PC-9 (cell line): ENCODE measurements at regions of chr19 and their contacts with region 1.

Region 1: DNA sequence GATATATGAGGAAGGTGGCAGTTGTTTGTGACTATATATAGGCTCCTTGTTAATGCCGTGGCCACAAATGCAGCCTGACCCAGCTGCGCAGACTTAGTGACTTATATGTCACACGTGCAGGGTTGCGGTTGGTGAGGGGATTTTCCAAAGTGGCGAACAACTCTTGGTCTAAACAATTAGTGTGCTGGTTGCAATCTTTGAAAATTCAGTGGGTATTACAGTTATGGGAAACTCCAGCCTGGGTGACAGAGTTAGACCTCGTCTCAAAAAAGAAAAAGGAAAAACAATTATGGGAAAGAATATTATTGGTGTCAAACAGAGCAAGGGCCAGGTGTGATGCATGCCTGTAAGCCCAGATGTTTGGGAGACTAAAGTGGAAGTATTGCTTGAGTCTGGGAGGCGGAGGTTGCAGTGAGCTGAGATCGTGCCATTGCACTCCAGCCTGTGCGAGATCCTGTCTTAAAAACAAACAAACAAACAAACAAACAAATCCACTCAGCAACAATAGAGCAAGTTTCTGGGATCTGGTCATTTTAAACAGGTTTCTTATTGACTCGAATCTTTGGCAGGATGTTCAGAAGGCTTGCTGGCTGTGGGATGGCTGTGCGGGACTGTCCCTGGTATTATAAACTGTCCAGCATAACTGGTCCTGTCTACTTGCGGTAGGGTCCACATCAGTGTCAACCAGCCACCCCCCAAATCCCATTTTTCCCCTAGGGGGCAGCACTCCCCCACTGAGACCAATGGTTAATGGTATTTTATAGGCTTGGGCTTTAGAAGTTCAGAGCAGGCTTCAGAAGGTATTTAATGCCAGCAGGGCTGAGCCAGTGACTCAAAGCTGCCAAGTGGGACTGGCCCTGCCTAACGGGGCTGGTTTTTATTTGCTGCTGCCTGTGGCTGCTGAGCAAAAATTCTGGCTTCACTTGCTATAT is 15.4 kb downstream of the RELB start:
- DNase-seq: peak; percentile 67 to 75
- H3K4me3 ChIP-seq: no peak overlapping the region
- H3K27ac ChIP-seq: no peak overlapping the region
- H3K4me1 ChIP-seq: no peaks in the 10 kb centered on the region
- H3K27me3 ChIP-seq: no peaks in the 10 kb centered on the region
- CTCF ChIP-seq: peak; percentile 80

Region 2: GRCh38 chr19:44817725-44818465 is 198.8 kb before region 1 on chr19:
- CTCF ChIA-PET with region 1: interaction called, 12 read pairs
- POLR2A ChIA-PET with region 1: no interaction called
- intact Hi-C with region 1: no loop called
- DNase-seq: no peak
- H3K4me3 ChIP-seq: no peak overlapping the region
- H3K27ac ChIP-seq: no peak overlapping the region
- H3K4me1 ChIP-seq: no peaks in the 10 kb centered on the region
- H3K27me3 ChIP-seq: no peaks in the 10 kb centered on the region
- CTCF ChIP-seq: no peak

Region 3: DNA sequence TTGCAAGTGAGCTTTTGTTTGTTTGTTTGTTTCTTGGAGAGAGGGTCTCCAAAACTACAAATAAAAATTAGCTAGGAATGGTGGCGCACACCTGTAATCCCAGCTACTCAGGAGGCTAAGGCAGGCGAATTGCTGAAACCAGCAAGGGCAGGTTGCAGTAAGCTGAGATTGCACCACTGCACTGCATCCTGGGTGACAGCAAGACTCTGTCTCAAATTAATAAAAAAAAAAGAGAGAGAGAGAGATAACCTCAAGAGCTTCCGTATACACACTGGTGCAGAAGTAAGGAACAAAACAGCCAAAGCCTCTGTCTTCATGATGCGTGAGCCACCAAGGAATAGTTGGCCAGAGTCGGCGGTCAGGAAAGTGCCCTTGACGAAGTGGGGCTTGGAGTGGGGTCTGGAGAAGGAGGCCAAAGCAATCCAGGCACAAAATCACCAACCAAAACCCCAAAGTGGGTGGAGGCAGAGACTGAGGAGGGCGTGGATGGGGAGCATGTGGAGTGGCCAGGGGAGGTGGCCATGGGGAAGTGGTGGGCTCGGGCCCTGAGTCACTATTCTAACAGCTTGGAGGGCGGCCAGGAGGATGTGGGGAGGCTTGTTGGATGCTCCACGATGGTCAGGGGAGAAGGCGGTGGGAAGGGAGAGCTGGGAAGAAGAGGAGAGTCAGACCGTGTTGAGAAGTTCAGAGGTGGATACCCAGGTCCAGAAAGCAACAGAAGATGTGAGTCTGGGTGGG is 146.8 kb before region 1 on chr19:
- CTCF ChIA-PET with region 1: no interaction called
- POLR2A ChIA-PET with region 1: no interaction called
- intact Hi-C with region 1: no loop called
- DNase-seq: no peak
- H3K4me3 ChIP-seq: no peak overlapping the region
- H3K27ac ChIP-seq: no peak overlapping the region
- H3K4me1 ChIP-seq: peaks cover 8% of the 10 kb centered on the region
- H3K27me3 ChIP-seq: no peaks in the 10 kb centered on the region
- CTCF ChIP-seq: no peak

Region 4: GRCh38 chr19:45027371-45027770 is 10.7 kb after region 1 on chr19:
- CTCF ChIA-PET with region 1: no interaction called
- POLR2A ChIA-PET with region 1: no interaction called
- intact Hi-C with region 1: no loop called
- DNase-seq: no peak
- H3K4me3 ChIP-seq: no peak overlapping the region
- H3K27ac ChIP-seq: no peak overlapping the region
- H3K4me1 ChIP-seq: no peaks in the 10 kb centered on the region
- H3K27me3 ChIP-seq: no peaks in the 10 kb centered on the region
- CTCF ChIP-seq: no peak

Region 5: DNA sequence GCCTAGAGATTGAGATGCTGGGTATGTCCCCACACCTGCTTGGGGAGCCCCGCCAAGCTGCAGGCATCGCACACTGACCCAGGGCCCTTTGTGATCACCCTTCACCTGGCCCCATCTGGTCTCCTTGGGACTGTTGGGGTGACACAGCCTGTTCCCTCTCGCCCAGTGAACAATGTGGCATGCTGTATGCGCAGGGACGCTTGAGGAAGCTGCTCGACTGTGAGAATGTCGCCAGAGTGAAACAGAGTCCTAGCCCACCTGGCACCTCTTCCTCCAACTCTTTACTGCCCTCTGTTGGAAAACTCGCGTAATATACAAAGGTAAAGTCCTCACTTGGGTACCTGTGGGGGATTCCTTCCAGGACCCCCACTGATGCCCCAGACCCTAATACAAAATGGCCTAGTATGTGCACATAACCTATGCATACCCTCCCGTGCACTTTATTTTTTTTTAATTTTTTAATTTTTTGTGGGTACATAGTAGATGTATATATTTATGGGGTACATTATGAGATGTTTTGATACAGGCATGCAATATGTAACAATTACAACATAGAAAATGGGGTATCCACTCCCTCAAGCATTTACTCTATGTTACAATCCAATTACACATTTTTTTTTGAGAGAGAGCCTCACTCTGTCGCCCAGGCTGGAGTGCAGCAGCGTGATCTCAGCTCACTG is 170.9 kb after region 1 on chr19:
- CTCF ChIA-PET with region 1: no interaction called
- POLR2A ChIA-PET with region 1: no interaction called
- intact Hi-C with region 1: loop called (anchors 5 kb)
- DNase-seq: peak in 1 of 2 experiments; percentile 21
- H3K4me3 ChIP-seq: no peak overlapping the region
- H3K27ac ChIP-seq: no peak overlapping the region
- H3K4me1 ChIP-seq: peaks cover 8% of the 10 kb centered on the region
- H3K27me3 ChIP-seq: no peaks in the 10 kb centered on the region
- CTCF ChIP-seq: peak; percentile 80

Region 6: DNA sequence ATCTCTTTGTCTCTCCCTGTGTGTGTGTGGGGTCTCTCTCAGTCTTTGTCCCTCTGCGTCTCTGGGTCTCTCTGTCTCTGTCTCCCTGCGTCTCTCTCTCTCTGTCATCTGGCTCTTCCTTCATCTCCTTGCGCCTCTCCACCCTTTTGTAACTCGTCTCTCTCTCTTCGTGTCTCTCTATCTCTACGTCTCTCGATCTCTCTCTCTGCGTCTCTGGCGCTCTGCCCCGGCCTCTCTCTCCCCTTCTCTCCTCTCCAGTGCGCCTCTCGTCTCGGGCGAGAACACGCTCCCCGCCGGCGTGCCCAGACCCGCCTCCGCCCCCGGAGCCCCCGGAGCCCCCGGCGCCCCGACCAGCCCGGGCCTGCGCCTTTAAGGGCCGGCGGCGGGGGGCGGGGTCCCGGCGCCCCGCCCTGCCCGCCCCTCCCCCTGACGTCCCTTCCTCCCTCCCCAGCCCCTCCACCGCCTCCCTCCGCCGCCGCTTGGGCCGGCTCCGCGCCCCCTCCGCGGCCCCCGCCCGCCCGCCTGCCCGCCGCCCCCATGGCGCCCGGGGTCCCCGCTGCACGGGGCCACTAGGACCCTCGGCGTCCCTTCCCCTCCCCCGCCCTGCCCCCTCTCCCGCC is 234.3 kb after region 1 on chr19 and contains the start of gene MARK4:
- CTCF ChIA-PET with region 1: no interaction called
- POLR2A ChIA-PET with region 1: no interaction called
- intact Hi-C with region 1: loop called (anchors 2 kb)
- DNase-seq: peak in 1 of 2 experiments; percentile 40
- H3K4me3 ChIP-seq: peak within 1 kb of the TSS; percentile 80
- H3K27ac ChIP-seq: no peak within 1 kb of the TSS
- H3K4me1 ChIP-seq: peaks cover 16% of the 10 kb centered on the region
- H3K27me3 ChIP-seq: no peaks in the 10 kb centered on the region
- CTCF ChIP-seq: no peak
- total RNA-seq, gene MARK4: 49.4 and 85.8 TPM in 2 replicates

Region 7: GRCh38 chr19:45455707-45456499 is 439.2 kb after region 1 on chr19:
- CTCF ChIA-PET with region 1: no interaction called
- POLR2A ChIA-PET with region 1: no interaction called
- intact Hi-C with region 1: no loop called
- DNase-seq: peak; percentile 98
- H3K4me3 ChIP-seq: peak overlapping the region; percentile 53; the same call in 1 of the 2 replicates
- H3K27ac ChIP-seq: peak overlapping the region; percentile 93
- H3K4me1 ChIP-seq: peaks cover 38% of the 10 kb centered on the region
- H3K27me3 ChIP-seq: no peaks in the 10 kb centered on the region
- CTCF ChIP-seq: no peak

Region 8: GRCh38 chr19:45739498-45740439 is 723.1 kb after region 1 on chr19:
- CTCF ChIA-PET with region 1: no interaction called
- POLR2A ChIA-PET with region 1: no interaction called
- intact Hi-C with region 1: no loop called
- DNase-seq: no peak
- H3K4me3 ChIP-seq: no peak overlapping the region
- H3K27ac ChIP-seq: no peak overlapping the region
- H3K4me1 ChIP-seq: peaks cover 4% of the 10 kb centered on the region; the same call in 1 of the 2 replicates
- H3K27me3 ChIP-seq: no peaks in the 10 kb centered on the region
- CTCF ChIP-seq: no peak